Transverse colon (tissue), 4 donors: ENCODE measurements at regions of chr3 and their contacts with region 1.

Region 1: GRCh38 chr3:85007195-85008094 is 48.7 kb downstream of the CADM2 start:
- DNase-seq: no peak
- H3K4me3 ChIP-seq: no peak overlapping the region
- H3K27ac ChIP-seq: no peak overlapping the region
- H3K4me1 ChIP-seq: no peaks in the 10 kb centered on the region
- H3K27me3 ChIP-seq: no peaks in the 10 kb centered on the region
- CTCF ChIP-seq: no peak
- EP300 ChIP-seq: no peak
- POLR2A ChIP-seq: no peak

Region 2: DNA sequence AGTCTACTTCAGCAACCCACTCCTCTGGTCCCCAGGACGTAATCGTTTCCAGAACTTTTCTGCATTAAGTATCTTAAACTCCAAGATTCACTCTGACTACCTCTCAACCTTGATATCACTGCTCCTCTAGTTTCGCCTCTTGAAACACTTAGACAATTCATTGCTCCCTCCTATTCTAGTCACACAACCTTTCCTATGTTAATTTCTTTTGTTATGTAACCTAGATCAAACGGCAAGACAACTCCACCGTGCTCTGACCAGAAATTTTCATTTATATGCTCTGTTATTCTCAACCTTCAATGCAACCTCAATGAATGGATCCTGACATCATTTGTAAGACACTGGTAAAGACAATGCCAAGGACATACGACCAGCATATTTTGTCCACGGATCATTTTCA is 22.6 kb after region 1 on chr3:
- in situ Hi-C with region 1: no loop called
- intact Hi-C with region 1: loop called (anchors 1 kb)
- DNase-seq: no peak
- H3K4me3 ChIP-seq: no peak overlapping the region
- H3K27ac ChIP-seq: no peak overlapping the region
- H3K4me1 ChIP-seq: no peaks in the 10 kb centered on the region
- H3K27me3 ChIP-seq: no peaks in the 10 kb centered on the region
- CTCF ChIP-seq: no peak
- EP300 ChIP-seq: no peak
- POLR2A ChIP-seq: no peak

Region 3: GRCh38 chr3:85758442-85758841 is 751.0 kb after region 1 on chr3:
- in situ Hi-C with region 1: no loop called
- intact Hi-C with region 1: no loop called
- DNase-seq: no peak
- H3K4me3 ChIP-seq: no peak overlapping the region
- H3K27ac ChIP-seq: no peak overlapping the region
- H3K4me1 ChIP-seq: no peaks in the 10 kb centered on the region
- H3K27me3 ChIP-seq: no peaks in the 10 kb centered on the region
- CTCF ChIP-seq: no peak
- EP300 ChIP-seq: no peak
- POLR2A ChIP-seq: no peak